Activated naive CD4-positive, alpha-beta T cell treated with anti-CD3 and anti-CD28 coated beads for 36 hours (primary cell): ENCODE measurements at regions of chr15 and their contacts with region 1.

Region 1: GRCh38 chr15:77974098-77974414 is 103.5 kb downstream of the TBC1D2B start:
- DNase-seq: no peak
- H3K4me3 Mint-ChIP-seq: no peak overlapping the region
- H3K27ac Mint-ChIP-seq: no peak overlapping the region
- H3K4me1 Mint-ChIP-seq: no peaks in the 10 kb centered on the region
- H3K27me3 Mint-ChIP-seq: no peaks in the 10 kb centered on the region

Region 2: DNA sequence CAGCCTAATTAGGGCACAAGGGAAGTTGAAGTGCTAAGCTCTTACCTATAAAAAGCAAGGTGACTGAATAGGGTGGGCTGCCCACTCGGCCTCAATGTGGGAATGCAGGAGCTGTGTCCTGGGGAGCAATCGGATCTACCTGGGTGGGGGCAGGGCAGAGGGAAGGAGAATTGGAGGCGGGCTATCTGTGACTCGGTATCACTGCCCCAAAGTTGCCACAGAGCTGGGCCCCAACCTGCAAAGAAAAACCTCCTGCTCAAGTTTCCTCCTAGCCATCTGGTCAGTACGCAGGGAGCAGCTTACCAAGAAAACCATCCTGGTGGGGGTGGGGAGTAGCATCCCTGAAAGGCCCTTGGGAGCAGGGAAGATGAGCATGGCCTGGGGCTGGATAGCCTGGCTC is 146.5 kb after region 1 on chr15:
- CTCF ChIA-PET with region 1: no interaction called
- intact Hi-C with region 1: no loop called
- DNase-seq: no peak
- H3K4me3 Mint-ChIP-seq: no peak overlapping the region
- H3K27ac Mint-ChIP-seq: no peak overlapping the region
- H3K4me1 Mint-ChIP-seq: no peaks in the 10 kb centered on the region
- H3K27me3 Mint-ChIP-seq: no peaks in the 10 kb centered on the region

Region 3: DNA sequence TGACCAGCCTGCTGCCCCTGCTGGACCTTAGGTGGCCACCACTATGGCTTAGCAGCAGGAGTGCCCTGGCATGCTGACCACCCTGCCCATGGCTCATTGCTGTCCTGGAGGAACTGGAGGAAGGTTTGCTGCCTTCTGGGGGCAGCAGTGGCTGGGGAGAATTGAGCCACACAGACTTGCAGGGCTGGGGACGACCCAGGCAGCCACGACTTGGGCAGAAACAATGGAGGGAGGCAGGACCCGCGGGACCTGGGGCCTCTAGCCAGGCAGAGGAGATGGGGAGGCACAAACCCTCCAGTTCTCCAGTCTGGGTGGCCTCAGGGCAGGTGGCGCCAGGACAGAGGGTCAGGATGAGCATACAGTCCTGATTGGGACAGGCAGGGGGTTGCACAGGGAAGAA is 804.4 kb after region 1 on chr15:
- CTCF ChIA-PET with region 1: no interaction called
- intact Hi-C with region 1: loop called (anchors 10 kb)
- DNase-seq: no peak
- H3K4me3 Mint-ChIP-seq: no peak overlapping the region
- H3K27ac Mint-ChIP-seq: no peak overlapping the region
- H3K4me1 Mint-ChIP-seq: no peaks in the 10 kb centered on the region
- H3K27me3 Mint-ChIP-seq: no peaks in the 10 kb centered on the region